ENCODE measurements at regions of chr19 and their contacts with region 1.

Region 1: GRCh38 chr19:47075179-47075810 is 26.9 kb upstream of the TMEM160 start:
- DNase-seq: no peak
- H3K4me3 Mint-ChIP-seq: no peak overlapping the region
- H3K27ac Mint-ChIP-seq: peak overlapping the region; percentile 40
- H3K4me1 Mint-ChIP-seq: peaks cover 11% of the 10 kb centered on the region
- H3K27me3 Mint-ChIP-seq: no peaks in the 10 kb centered on the region

Region 2: GRCh38 chr19:47056411-47056810 is 18.9 kb before region 1 on chr19:
- CTCF ChIA-PET with region 1: no interaction called
- POLR2A ChIA-PET with region 1: no interaction called
- DNase-seq: no peak
- H3K4me3 Mint-ChIP-seq: no peak overlapping the region
- H3K27ac Mint-ChIP-seq: no peak overlapping the region
- H3K4me1 Mint-ChIP-seq: no peaks in the 10 kb centered on the region
- H3K27me3 Mint-ChIP-seq: peaks cover 12% of the 10 kb centered on the region

Region 3: GRCh38 chr19:47094557-47095475 is 19.5 kb after region 1 on chr19:
- CTCF ChIA-PET with region 1: interaction called, 10 read pairs
- POLR2A ChIA-PET with region 1: interaction called, 8 read pairs
- DNase-seq: peak; percentile 74
- H3K4me3 Mint-ChIP-seq: peak overlapping the region; percentile 79
- H3K27ac Mint-ChIP-seq: peak overlapping the region; percentile 91
- H3K4me1 Mint-ChIP-seq: peaks cover 83% of the 10 kb centered on the region
- H3K27me3 Mint-ChIP-seq: no peaks in the 10 kb centered on the region